ENCODE measurements at regions of chr11 and their contacts with region 1.

Region 1: GRCh38 chr11:121464352-121464946 is 11.7 kb upstream of the SORL1-AS1 start:
- DNase-seq: peak; percentile 66
- H3K4me3 Mint-ChIP-seq: peak overlapping the region; percentile 76
- H3K27ac Mint-ChIP-seq: peak overlapping the region; percentile 94
- H3K4me1 Mint-ChIP-seq: peaks cover 94% of the 10 kb centered on the region
- H3K27me3 Mint-ChIP-seq: peaks cover 2% of the 10 kb centered on the region

Region 2: DNA sequence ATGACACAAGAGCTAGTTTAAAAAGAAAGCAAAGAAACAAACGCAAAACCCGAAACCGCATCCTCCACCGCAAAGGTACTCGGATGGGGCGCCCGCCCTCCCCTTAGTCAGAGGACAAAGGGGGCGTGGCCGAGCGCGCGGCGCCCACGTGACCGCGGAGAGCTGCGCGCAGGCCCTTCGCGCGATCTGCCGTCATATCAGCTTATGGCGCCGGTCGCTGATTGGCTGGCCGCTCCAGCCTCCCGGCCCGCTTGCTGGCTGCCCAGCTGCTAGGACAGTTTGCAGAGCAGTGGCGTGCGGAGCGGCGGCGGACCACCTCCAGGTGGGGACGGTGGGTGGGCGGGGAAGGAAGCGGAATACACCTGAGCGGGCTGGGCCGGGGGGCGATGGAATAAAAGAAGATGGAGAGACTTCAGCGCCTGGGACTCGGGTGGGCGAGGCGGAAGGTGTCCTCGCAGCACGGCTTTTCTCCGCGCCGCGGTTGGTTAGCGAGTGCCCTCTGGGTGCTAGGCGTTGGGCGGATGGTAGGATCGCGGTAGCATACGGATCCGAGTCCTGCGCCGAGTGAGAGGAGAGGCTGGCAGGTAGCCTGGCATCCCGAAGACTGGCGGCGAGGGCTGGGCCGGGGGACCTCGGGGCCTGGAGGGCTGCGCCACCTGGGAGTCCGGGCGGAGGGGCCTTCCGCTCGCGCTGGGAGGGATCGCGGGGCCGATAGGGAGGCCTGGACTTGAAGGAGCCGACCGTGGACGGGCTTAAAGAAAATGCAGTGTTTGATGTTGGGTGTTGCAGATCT is 171.8 kb before region 1 on chr11 and contains the start of gene SC5D:
- intact Hi-C with region 1: loop called (anchors 1 kb)
- DNase-seq: peak; percentile 94
- H3K4me3 Mint-ChIP-seq: peak within 1 kb of the TSS; percentile 93
- H3K27ac Mint-ChIP-seq: peak within 1 kb of the TSS; percentile 97
- H3K4me1 Mint-ChIP-seq: peaks cover 53% of the 10 kb centered on the region
- H3K27me3 Mint-ChIP-seq: peaks cover 10% of the 10 kb centered on the region
- total RNA-seq, gene SC5D: 21.9 and 26.3 TPM in 2 replicates

Region 3: GRCh38 chr11:121328967-121329679 is 135.3 kb before region 1 on chr11:
- intact Hi-C with region 1: loop called (anchors 2 kb)
- DNase-seq: no peak
- H3K4me3 Mint-ChIP-seq: no peak overlapping the region
- H3K27ac Mint-ChIP-seq: no peak overlapping the region
- H3K4me1 Mint-ChIP-seq: no peaks in the 10 kb centered on the region
- H3K27me3 Mint-ChIP-seq: peaks cover 4% of the 10 kb centered on the region

Region 4: GRCh38 chr11:121417055-121417551 is 47.3 kb before region 1 on chr11:
- intact Hi-C with region 1: loop called (anchors 1 kb)
- DNase-seq: peak; percentile 27
- H3K4me3 Mint-ChIP-seq: peak overlapping the region; percentile 12
- H3K27ac Mint-ChIP-seq: peak overlapping the region; percentile 40
- H3K4me1 Mint-ChIP-seq: peaks cover 65% of the 10 kb centered on the region
- H3K27me3 Mint-ChIP-seq: no peaks in the 10 kb centered on the region

Region 5: DNA sequence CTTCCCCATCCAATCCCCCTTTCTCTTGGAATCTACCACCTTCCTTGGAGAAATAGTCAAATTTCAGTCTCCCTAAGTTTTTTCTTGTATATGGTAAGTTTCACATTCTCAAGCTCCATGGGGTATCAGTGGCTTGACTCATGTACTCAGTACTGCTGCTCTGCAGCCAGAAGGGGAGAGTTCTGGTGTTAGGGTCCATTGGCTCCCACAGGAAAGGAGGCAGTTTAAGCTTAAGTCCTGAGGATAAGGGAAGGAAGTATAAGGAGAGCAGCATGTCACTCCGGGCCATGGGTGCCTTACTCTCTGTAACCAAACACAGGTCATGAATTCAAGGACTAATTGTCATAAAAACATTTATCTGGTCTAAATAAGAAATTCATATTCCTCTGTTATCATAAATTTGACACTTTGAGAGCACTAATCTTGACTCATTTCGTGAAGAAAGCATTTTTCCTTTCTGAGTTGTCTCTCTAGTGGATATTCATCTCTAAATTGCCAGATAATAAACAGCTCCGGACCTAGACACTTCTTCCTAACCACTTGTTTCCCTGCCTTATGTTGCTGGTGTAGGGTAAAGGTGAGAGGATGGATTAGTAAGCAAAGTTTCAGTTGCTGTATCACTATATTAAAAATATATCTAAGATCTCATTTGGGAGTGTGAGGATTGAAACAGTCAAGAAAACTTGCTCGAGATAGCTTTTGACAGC is 32.5 kb before region 1 on chr11:
- intact Hi-C with region 1: loop called (anchors 1 kb)
- DNase-seq: no peak
- H3K4me3 Mint-ChIP-seq: no peak overlapping the region
- H3K27ac Mint-ChIP-seq: peak overlapping the region; percentile 36
- H3K4me1 Mint-ChIP-seq: peaks cover 27% of the 10 kb centered on the region
- H3K27me3 Mint-ChIP-seq: peaks cover 3% of the 10 kb centered on the region

Region 6: GRCh38 chr11:121482231-121483129 is 18.0 kb after region 1 on chr11:
- intact Hi-C with region 1: loop called (anchors 1 kb)
- DNase-seq: peak; percentile 53
- H3K4me3 Mint-ChIP-seq: peak overlapping the region; percentile 76
- H3K27ac Mint-ChIP-seq: peak overlapping the region; percentile 96
- H3K4me1 Mint-ChIP-seq: peaks cover 36% of the 10 kb centered on the region
- H3K27me3 Mint-ChIP-seq: no peaks in the 10 kb centered on the region

Region 7: DNA sequence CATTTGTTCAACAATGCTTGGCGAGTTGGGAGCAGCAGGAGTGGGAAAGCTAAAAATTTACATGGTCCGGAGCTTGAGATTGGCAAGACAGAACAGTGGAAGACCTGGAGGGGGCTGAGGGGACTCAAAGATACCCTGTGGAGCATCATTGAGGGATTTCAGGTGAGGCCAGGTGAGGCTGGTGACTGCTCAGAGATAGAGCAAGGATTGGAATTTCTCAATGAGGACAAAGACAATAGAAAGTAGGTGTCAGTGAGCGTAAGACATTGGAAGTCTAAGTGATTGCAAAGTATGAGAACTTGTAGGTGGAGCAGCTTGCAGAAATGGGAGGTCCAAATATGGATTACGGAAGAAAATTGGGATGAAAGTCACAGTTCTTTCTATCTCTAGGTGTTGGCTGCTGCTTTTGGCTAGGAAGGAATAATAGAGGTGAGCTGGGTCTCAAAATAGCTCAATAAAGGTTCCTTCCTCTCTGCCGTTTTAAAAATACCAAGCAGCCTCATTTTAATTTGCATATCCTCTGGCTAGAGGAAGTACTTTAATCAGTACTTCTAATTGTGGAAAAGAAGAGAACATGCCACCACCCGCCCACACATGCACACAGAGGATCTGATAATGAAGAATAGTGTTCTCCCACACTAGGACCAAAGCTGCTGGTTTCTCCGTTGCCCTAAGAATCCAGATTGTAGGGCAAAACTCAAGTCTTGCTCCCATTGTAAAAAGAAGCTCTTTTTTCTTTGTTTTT is 30.1 kb after region 1 on chr11:
- intact Hi-C with region 1: loop called (anchors 1 kb)
- DNase-seq: no peak
- H3K4me3 Mint-ChIP-seq: peak overlapping the region; percentile 39
- H3K27ac Mint-ChIP-seq: peak overlapping the region; percentile 66
- H3K4me1 Mint-ChIP-seq: peaks cover 31% of the 10 kb centered on the region
- H3K27me3 Mint-ChIP-seq: no peaks in the 10 kb centered on the region

Measured in activated T-helper 1 cell treated with anti-CD3 and anti-CD28 coated beads, Interleukin-12 subunit alpha, Interleukin-12 subunit beta, Interleukin-2, Interleukin-4 antibody, amounts not matched to agents 30 ng/mL and 10 ng/mL and 1 ng/mL, durations not matched to agents 14 hours and 24 hours and 36 hours (primary cell).